Activated CD4-positive, alpha-beta memory T cell treated with anti-CD3 and anti-CD28 coated beads, Interleukin-2, amount 10 ng/mL, durations not matched to agents 7 days and 5 days (primary cell): ENCODE measurements at regions of chr20 and their contacts with region 1.

Region 1: DNA sequence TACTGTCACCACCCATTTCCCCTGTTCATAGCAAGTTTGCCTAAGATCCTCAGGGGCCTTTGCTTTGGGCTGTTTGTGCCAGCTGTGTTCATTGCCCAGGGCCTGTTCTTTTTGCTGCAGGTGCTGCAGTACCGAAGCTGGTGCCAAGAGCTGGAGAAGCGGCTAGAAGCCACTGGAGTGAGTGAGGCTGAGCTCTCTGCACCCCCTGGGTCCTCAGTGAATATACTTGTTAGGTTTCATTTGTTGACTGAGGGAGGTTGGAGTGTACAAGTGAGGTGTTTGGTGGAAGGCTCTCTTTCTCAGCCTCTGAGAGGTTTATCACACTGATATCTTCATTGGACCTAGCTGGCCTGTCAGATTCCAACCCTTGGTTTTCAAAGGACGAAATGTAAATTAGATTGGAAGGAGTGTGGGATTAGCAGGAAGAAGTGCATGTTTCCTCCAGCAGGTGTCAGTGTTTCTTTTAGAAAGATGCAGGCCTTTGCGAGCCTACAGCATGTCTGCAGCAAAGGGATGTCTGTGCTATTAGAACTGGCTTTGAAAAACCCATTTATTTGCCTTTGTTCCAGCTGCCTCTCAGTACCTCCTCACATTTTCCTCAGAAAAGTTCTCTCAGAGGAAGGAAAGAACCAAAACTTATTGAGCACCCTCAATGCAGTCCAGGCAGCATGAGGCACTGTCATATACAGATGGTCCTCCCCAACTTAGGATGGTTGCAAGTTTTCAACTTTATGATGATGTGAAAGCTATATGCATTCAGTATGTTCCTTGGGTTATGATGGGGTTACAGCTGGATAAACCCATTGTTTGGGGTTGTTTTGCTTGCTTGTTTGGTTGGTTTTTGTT is 8.3 kb downstream of the CEP250 start:
- DNase-seq: peak; percentile 63
- H3K4me3 Mint-ChIP-seq: no peak overlapping the region
- H3K27ac Mint-ChIP-seq: no peak overlapping the region
- H3K4me1 Mint-ChIP-seq: peaks cover 2% of the 10 kb centered on the region
- H3K27me3 Mint-ChIP-seq: no peaks in the 10 kb centered on the region

Region 2: GRCh38 chr20:35344354-35344837 is 119.3 kb before region 1 on chr20:
- CTCF ChIA-PET with region 1: no interaction called
- POLR2A ChIA-PET with region 1: no interaction called
- DNase-seq: no peak
- H3K4me3 Mint-ChIP-seq: no peak overlapping the region
- H3K27ac Mint-ChIP-seq: no peak overlapping the region
- H3K4me1 Mint-ChIP-seq: no peaks in the 10 kb centered on the region
- H3K27me3 Mint-ChIP-seq: no peaks in the 10 kb centered on the region

Region 3: DNA sequence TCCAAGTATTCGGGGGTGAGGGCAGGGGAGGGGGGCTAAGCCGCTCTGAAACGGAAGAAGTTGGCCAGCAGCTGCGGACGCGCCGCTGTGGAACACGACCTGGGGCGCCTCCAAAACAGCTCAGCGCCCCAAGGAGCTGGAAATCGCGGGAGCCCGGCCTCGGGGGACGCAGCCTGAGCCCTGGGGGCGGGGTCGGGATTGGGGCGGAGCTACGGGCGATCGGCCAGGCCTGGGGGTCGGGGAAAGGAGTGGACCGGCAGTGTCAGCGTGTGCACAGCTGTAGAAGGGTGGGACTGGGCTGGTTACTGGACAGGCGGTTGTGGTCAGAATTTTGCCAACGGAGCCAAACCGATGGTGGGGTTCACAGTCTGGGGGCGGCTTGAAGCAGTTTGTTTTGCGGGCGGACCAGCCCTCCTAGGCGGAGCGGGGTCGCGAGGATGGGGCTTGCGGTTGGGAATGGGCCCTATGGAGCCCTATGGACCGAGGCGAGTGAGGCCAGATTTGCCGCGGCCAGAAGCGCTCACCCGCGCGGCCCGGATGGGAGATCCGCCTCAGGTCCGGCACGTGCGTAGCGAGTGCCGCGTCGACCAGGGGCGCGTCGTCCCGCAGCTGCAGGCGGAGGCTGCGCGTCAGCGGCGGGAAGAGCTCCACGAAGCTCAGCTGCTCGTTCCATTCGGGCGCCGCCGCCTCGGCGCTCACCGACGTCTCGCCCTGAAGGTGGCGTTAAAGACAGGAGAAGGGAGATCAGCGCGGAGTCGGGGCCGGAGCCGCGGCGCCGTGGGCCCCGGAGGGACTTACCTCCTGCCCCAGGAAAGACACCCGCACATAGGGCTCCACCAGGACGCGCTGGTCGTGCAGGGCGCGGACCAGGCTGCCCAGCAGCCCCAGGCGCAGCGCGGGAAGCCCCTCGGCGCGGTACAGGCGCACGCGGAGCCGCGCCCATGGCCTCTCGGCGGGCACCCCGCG is 137.6 kb after region 1 on chr20:
- CTCF ChIA-PET with region 1: interaction called, 11 read pairs
- POLR2A ChIA-PET with region 1: no interaction called
- DNase-seq: peak; percentile 82
- H3K4me3 Mint-ChIP-seq: peak overlapping the region; percentile 60
- H3K27ac Mint-ChIP-seq: no peak overlapping the region
- H3K4me1 Mint-ChIP-seq: peaks cover 8% of the 10 kb centered on the region
- H3K27me3 Mint-ChIP-seq: peaks cover 57% of the 10 kb centered on the region